ENCODE measurements at regions of chr7 and their contacts with region 1.

Region 1: DNA sequence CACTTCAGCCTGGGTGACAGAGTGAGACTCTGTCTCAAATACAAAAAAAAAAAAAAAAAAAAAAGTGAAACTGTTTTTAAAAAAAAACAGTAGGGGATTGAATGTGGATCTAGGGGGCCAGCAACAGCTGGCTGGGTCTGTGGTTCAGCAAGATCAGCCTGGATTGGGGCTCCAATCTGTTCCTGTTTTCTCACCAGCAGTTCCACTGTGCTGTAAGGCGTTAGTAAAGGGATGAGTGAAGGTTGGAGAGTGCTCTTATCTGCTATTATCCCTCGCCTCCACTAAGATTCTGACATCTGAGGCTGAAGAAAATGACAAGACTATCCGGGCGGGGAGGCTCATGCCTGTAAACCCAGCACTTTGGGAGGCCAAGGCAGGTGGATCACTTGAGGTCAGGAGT is 41.6 kb upstream of the GTF2IRD1 start:
- DNase-seq: peak; percentile 34 to 81 (median 73)
- H3K4me3 ChIP-seq: no peak overlapping the region
- H3K27ac ChIP-seq: no peak overlapping the region
- H3K4me1 ChIP-seq: peaks cover 0 to 3% (median 0%) of the 10 kb centered on the region in 4 experiments
- H3K27me3 ChIP-seq: no peaks in the 10 kb centered on the region

Region 2: GRCh38 chr7:74428023-74428422 is 16.0 kb after region 1 on chr7:
- CTCF ChIA-PET with region 1: interaction called, 11 read pairs
- POLR2A ChIA-PET with region 1: interaction called, 3 read pairs
- DNase-seq: no peak
- H3K4me3 ChIP-seq: no peak overlapping the region
- H3K27ac ChIP-seq: no peak overlapping the region
- H3K4me1 ChIP-seq: no peaks in the 10 kb centered on the region
- H3K27me3 ChIP-seq: no peaks in the 10 kb centered on the region

Region 3: GRCh38 chr7:74633451-74633921 is 221.4 kb after region 1 on chr7:
- CTCF ChIA-PET with region 1: no interaction called
- POLR2A ChIA-PET with region 1: no interaction called
- DNase-seq: peak in 2 of 3 donors; percentile 14 to 39
- H3K4me3 ChIP-seq: no peak overlapping the region
- H3K27ac ChIP-seq: no peak overlapping the region
- H3K4me1 ChIP-seq: peaks cover 0 to 5% (median 1%) of the 10 kb centered on the region in 4 experiments
- H3K27me3 ChIP-seq: no peaks in the 10 kb centered on the region